ENCODE measurements at regions of chr12 and their contacts with region 1.

Region 1: DNA sequence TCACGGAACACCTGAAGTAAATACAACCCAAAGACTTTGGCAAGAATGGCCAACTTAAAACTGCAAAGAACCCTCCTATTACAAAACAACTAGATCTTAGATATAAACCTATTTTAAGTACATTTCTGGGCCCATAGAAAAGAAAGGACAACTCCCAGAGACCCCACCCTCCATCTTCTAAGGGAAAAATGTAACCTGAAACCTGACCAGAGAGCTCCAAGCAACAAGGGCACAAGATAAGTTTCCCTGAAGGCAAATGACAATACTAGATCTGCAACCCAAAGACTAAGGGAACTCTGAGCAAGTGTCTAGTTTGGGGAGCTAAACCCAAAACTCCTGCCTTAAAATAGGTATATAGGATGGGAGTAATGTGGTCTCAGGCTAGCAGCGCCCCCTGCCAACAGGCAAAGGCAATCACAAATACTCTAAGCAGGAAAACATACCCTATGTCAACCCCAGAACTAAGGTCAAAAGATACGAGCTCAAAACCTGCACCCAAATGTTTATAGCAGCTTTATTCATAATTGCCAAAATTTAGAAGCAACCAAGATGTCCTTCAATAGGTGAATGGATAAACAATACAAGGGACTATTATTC is 218.9 kb downstream of the ITPR2 start:
- DNase-seq: no peak
- H3K4me3 ChIP-seq: no peak overlapping the region
- CTCF ChIP-seq: peak; percentile 62

Region 2: GRCh38 chr12:26097046-26097878 is 516.9 kb before region 1 on chr12:
- CTCF ChIA-PET with region 1: interaction called, 10 read pairs
- POLR2A ChIA-PET with region 1: no interaction called
- DNase-seq: no peak
- H3K4me3 ChIP-seq: no peak overlapping the region
- CTCF ChIP-seq: peak; percentile 86

Region 3: GRCh38 chr12:26113853-26114719 is 500.0 kb before region 1 on chr12:
- CTCF ChIA-PET with region 1: interaction called, 90 read pairs
- POLR2A ChIA-PET with region 1: no interaction called
- DNase-seq: peak; percentile 24
- H3K4me3 ChIP-seq: peak overlapping the region; percentile 62
- CTCF ChIP-seq: peak; percentile 27

Region 4: GRCh38 chr12:26125400-26126339 is 488.4 kb before region 1 on chr12:
- CTCF ChIA-PET with region 1: interaction called, 90 read pairs
- POLR2A ChIA-PET with region 1: no interaction called
- DNase-seq: peak; percentile 24
- H3K4me3 ChIP-seq: peak overlapping the region; percentile 69
- CTCF ChIP-seq: no peak

Region 5: DNA sequence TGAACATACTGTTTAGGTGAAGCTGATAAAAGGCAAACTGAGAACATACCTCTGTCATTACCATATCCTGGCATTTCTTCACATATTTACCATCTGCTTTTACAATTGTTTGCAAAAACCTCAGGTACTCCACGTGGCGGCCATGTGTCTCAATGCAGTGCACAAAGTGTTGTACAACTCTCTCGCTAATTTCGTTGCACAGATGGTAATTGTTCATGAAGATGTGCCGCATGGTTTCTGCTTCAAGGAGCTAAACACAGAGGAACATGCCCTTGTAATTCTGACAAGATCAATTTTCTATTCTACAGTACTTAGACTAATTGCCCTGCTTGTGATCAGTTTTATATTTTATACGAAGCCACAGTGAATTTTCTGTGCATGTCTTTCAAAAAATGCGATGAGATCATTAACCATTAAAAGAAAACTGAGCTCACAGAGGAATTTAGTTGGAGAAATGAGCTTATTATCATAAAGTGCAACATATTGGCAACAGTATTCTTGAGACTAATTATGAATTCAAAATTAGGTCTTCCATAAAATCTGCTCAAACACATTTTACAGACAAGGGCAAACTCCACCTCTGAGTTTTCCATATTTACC is 14.9 kb before region 1 on chr12:
- CTCF ChIA-PET with region 1: interaction called, 23 read pairs
- POLR2A ChIA-PET with region 1: no interaction called
- DNase-seq: no peak
- H3K4me3 ChIP-seq: no peak overlapping the region
- CTCF ChIP-seq: no peak

Region 6: DNA sequence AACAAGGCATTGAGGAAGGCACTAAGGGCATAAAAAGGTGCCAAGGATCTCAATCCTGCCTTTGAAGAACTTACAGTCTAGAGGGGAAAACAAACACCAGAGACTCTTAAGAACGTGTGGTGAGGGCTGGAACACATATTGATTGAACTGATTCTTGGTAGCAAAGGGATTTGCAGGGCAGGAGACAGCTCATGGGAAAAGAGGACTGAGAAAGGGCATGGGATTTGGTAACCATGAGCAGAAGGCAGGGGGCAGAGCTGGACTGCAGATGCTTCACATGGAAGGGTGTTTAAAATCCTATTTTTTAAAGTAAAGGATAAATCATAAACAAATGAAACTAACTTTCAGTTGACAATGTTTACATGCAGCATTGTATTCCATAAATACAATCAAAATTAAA is 15.7 kb after region 1 on chr12:
- CTCF ChIA-PET with region 1: interaction called, 18 read pairs
- POLR2A ChIA-PET with region 1: no interaction called
- DNase-seq: no peak
- H3K4me3 ChIP-seq: peak overlapping the region; percentile 4
- CTCF ChIP-seq: peak; percentile 39

Region 7: DNA sequence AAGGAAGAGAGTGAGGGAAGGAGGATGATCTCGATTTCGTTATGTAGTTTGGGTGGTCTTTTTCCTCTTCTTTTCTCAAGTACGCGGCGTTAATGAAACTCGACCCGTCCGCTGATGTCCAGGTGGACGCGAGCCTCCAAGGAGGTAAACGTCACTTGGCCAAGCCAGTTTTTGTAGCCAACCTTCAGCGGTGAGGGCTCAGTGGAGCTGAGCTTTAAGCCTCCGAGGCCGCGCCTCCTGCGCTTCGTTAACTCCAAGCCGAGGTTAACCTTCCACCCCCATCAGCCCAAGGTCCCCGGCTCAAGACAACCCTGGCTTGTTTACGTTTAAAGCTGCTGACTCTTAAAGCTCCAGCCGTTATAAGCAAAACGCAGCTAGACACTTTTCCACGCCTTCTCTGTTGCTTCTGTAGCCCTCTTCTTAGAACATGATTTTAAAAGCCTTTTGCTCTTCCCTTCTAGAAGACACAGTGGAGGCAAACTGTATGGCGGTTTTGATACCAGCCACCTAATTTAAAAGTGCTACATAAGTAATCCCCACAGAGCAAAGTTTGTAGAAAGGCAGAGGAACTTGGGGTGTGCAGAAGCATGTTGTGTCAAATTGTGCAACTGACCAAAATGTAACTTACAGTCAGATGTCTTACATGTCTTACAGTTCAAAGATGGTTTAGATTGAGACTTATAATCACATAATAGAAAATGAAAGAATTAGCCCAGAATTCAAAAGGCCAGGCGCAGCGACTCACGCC is 219.8 kb after region 1 on chr12:
- CTCF ChIA-PET with region 1: no interaction called
- POLR2A ChIA-PET with region 1: no interaction called
- DNase-seq: no peak
- H3K4me3 ChIP-seq: peak overlapping the region; percentile 65
- CTCF ChIP-seq: no peak